GM12878 (cell line): ENCODE measurements at regions of chr2 and their contacts with region 1.

Region 1: DNA sequence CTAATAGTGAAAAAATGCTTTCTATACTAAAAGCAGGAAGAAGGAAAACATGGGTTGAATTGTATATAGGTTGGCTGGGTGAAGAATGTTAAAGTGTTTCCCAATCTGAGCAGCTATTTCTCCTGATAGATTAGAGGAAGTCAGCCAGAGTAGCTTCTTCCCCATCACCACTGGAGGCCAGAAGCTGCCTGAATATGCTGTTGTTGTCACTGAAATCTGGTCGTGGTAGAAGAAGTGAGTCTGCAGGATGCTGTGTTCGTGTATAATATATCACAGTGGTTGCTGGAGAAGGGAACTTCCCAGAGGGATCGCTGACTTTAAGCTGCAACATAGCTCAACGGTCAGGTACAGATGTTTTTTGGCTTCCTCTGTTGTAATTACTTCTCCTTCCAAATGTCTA is 247.5 kb upstream of the LRATD1 start:
- DNase-seq: no peak
- ATAC-seq: peak; percentile 42
- H3K4me3 ChIP-seq: no peak overlapping the region
- H3K27ac ChIP-seq: no peak overlapping the region
- H3K4me1 ChIP-seq: no peaks in the 10 kb centered on the region
- H3K27me3 ChIP-seq: no peaks in the 10 kb centered on the region
- CTCF ChIP-seq: peak in 1 of 3 experiments; percentile 24; a peak in 2 of 6 replicates
- EP300 ChIP-seq: no peak
- POLR2A ChIP-seq: no peak
- RAD21 ChIP-seq: peak; percentile 50; the same call in 1 of the 2 replicates

Region 2: DNA sequence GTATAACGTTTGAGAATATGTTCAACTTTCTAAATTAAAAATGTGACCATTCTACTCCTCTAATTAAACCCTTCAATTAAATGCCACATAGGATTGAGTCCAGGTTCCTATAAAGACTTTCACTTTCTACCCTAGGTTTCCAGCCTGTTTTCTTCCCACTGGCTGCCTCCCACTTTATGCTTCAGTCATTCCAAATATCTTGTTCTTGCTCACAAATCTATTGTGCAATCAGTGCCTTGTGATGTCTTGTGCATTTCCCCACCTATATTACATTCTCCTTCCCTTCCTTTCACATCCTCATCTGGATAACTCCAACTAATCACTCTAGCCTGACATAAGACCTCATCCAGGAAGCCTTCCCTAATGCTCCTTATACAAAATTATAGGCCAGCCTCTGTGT is 34.2 kb before region 1 on chr2:
- CTCF ChIA-PET with region 1: no interaction called
- POLR2A ChIA-PET with region 1: no interaction called
- RAD21 ChIA-PET with region 1: no interaction called
- SMC1A ChIA-PET with region 1: no interaction called
- in situ Hi-C with region 1: no loop called
- intact Hi-C with region 1: no loop called
- DNase-seq: no peak
- ATAC-seq: no peak
- H3K4me3 ChIP-seq: no peak overlapping the region
- H3K27ac ChIP-seq: no peak overlapping the region
- H3K4me1 ChIP-seq: no peaks in the 10 kb centered on the region
- H3K27me3 ChIP-seq: no peaks in the 10 kb centered on the region
- CTCF ChIP-seq: no peak
- EP300 ChIP-seq: no peak
- POLR2A ChIP-seq: no peak
- RAD21 ChIP-seq: no peak

Region 3: GRCh38 chr2:14401873-14402272 is 16.8 kb after region 1 on chr2:
- CTCF ChIA-PET with region 1: interaction called, 12 read pairs
- POLR2A ChIA-PET with region 1: no interaction called
- RAD21 ChIA-PET with region 1: interaction called, 4 read pairs
- SMC1A ChIA-PET with region 1: interaction called, 5 read pairs
- in situ Hi-C with region 1: no loop called
- intact Hi-C with region 1: no loop called
- DNase-seq: no peak
- ATAC-seq: peak; percentile 44; the same call in 2 of the 3 replicates
- H3K4me3 ChIP-seq: no peak overlapping the region
- H3K27ac ChIP-seq: no peak overlapping the region
- H3K4me1 ChIP-seq: no peaks in the 10 kb centered on the region
- H3K27me3 ChIP-seq: no peaks in the 10 kb centered on the region
- CTCF ChIP-seq: no peak
- EP300 ChIP-seq: no peak
- POLR2A ChIP-seq: no peak
- RAD21 ChIP-seq: no peak

Region 4: DNA sequence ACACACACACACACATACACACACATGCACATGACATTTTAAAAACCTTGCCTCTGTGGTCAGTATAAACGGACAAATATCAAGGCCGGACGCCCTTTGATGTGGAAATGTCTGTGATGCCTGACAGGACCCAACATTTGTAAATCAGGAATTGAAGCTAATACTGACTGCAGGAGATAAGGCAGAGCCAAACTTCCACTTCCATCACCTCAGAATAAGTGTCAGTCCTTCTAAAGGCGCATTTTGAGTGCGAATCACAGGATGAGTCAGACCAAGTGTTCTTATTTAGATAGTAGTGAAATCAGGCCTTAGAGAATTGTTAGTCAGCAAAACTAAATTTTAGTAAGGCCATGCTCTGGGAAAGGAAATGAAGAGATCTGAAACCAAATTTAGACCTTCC is 35.8 kb after region 1 on chr2:
- CTCF ChIA-PET with region 1: interaction called, 7 read pairs
- POLR2A ChIA-PET with region 1: no interaction called
- RAD21 ChIA-PET with region 1: interaction called, 5 read pairs
- SMC1A ChIA-PET with region 1: interaction called, 18 read pairs
- in situ Hi-C with region 1: no loop called
- intact Hi-C with region 1: no loop called
- DNase-seq: no peak
- ATAC-seq: peak; percentile 66
- H3K4me3 ChIP-seq: no peak overlapping the region
- H3K27ac ChIP-seq: no peak overlapping the region
- H3K4me1 ChIP-seq: no peaks in the 10 kb centered on the region
- H3K27me3 ChIP-seq: no peaks in the 10 kb centered on the region
- CTCF ChIP-seq: no peak
- EP300 ChIP-seq: no peak
- POLR2A ChIP-seq: no peak
- RAD21 ChIP-seq: no peak

Region 5: DNA sequence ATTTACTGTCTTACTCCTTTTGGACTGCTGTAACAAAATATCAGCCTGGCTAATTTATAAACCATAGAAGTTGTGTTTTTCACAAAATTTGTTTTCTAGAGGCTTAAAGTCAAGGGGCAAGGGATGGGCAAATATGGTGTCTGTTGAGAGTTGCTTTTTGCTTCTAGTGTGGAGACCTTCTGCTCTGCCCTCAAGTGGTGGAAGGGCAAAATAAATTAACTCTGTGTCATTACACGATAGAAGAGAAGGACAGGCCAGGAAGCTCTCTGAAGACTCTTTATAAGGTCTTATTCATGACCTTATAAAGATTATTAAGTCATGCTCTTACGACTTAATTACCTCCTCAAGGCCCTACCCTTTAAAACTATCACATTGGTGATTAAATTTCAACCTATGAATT is 66.3 kb after region 1 on chr2:
- CTCF ChIA-PET with region 1: interaction called, 12 read pairs
- POLR2A ChIA-PET with region 1: interaction called, 3 read pairs
- RAD21 ChIA-PET with region 1: interaction called, 6 read pairs
- SMC1A ChIA-PET with region 1: interaction called, 7 read pairs
- in situ Hi-C with region 1: no loop called
- intact Hi-C with region 1: no loop called
- DNase-seq: no peak
- ATAC-seq: no peak
- H3K4me3 ChIP-seq: no peak overlapping the region
- H3K27ac ChIP-seq: no peak overlapping the region
- H3K4me1 ChIP-seq: no peaks in the 10 kb centered on the region
- H3K27me3 ChIP-seq: no peaks in the 10 kb centered on the region
- CTCF ChIP-seq: peak in 1 of 3 experiments; percentile 24; a peak in 2 of 6 replicates
- EP300 ChIP-seq: no peak
- POLR2A ChIP-seq: no peak
- RAD21 ChIP-seq: peak; percentile 43

Region 6: DNA sequence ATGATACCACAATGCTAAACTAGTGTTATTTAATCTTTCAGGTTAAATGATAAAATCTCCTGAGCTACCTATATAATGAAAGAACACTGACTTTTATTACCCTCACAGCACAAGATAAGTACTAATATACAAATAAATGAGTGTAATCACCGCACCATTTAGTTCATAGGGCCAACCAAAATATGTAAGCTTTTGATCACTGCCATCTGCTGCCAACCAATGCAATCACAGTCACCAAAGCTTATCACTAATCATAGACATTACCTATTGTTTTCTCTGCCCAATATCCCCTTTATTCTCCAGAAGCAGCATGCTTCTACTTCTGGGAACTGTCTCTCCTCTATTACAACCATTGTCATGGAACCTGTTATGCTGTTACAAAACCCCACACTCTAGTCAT is 95.9 kb after region 1 on chr2:
- CTCF ChIA-PET with region 1: interaction called, 13 read pairs
- POLR2A ChIA-PET with region 1: no interaction called
- RAD21 ChIA-PET with region 1: interaction called, 8 read pairs
- SMC1A ChIA-PET with region 1: interaction called, 9 read pairs
- in situ Hi-C with region 1: no loop called
- intact Hi-C with region 1: no loop called
- DNase-seq: no peak
- ATAC-seq: no peak
- H3K4me3 ChIP-seq: no peak overlapping the region
- H3K27ac ChIP-seq: no peak overlapping the region
- H3K4me1 ChIP-seq: no peaks in the 10 kb centered on the region
- H3K27me3 ChIP-seq: no peaks in the 10 kb centered on the region
- CTCF ChIP-seq: no peak
- EP300 ChIP-seq: no peak
- POLR2A ChIP-seq: no peak
- RAD21 ChIP-seq: no peak